GM10248 (cell line): ENCODE measurements at regions of chr1 and their contacts with region 1.

Region 1: GRCh38 chr1:115706587-115707425 is 61.7 kb downstream of the CASQ2 start:
- DNase-seq: peak; percentile 51
- CTCF ChIP-seq: peak; percentile 59

Region 2: GRCh38 chr1:115643666-115644065 is 63.1 kb before region 1 on chr1:
- CTCF ChIA-PET with region 1: interaction called, 16 read pairs
- POLR2A ChIA-PET with region 1: no interaction called
- DNase-seq: no peak
- CTCF ChIP-seq: no peak

Region 3: DNA sequence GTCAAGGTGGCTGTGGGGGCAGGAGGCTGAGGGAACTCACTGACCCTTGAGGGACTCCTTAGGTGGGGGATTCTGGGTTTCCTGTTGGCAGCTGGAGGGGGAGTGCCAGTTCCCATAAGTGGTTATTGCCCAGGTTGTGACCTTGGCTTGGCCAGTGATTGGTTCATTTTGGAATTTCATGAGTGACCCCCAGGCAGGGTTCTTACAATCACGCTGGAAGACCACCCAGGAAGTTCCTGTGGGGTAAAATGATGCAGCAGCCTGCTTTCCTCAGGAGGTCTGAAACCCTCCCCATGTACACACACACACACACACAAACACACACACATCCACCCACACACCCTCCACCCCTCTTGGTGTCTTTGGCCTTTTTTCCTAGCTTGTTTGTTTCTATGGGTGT is 48.2 kb before region 1 on chr1:
- CTCF ChIA-PET with region 1: interaction called, 28 read pairs
- POLR2A ChIA-PET with region 1: no interaction called
- DNase-seq: no peak
- CTCF ChIP-seq: no peak

Region 4: DNA sequence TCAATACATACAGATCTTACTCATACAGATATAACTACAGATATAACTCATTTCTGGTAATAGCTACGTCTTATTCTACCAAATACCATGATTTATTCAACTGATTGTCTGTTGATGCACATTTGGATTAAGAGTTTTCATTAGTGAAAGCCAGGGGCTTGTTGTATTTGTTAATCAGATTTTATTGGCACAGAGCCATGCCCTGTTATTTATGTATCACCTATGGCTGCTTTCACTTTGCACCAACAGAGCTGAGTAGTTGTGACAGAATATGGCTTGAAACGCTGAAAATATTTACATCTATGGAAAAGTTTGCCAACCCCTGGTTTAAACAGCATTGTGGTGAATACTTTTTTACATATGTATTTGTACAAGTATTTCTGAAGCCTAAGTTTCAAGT is 18.6 kb before region 1 on chr1:
- CTCF ChIA-PET with region 1: interaction called, 28 read pairs
- POLR2A ChIA-PET with region 1: no interaction called
- DNase-seq: no peak
- CTCF ChIP-seq: no peak

Region 5: DNA sequence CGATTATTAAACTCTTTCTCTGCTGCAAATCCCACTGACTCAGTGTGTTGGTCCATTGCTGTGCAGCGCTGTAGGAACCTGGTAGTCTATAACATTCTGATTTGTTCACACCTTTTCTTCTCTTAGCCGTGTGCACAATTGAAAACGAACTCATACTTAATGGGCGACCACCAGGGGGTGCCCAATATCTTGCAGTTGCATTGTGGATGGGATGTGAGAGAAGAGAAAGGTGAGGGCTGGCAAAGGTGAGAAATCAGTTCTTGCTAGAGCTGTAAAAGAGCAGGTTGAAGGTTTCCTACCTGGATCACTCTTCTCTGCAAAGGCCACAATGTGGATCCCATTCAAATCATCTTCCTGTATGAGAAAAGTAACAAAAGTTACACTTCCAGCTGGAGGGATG is 10.7 kb after region 1 on chr1:
- CTCF ChIA-PET with region 1: interaction called, 52 read pairs
- POLR2A ChIA-PET with region 1: no interaction called
- DNase-seq: peak; percentile 29
- CTCF ChIP-seq: peak; percentile 47

Region 6: DNA sequence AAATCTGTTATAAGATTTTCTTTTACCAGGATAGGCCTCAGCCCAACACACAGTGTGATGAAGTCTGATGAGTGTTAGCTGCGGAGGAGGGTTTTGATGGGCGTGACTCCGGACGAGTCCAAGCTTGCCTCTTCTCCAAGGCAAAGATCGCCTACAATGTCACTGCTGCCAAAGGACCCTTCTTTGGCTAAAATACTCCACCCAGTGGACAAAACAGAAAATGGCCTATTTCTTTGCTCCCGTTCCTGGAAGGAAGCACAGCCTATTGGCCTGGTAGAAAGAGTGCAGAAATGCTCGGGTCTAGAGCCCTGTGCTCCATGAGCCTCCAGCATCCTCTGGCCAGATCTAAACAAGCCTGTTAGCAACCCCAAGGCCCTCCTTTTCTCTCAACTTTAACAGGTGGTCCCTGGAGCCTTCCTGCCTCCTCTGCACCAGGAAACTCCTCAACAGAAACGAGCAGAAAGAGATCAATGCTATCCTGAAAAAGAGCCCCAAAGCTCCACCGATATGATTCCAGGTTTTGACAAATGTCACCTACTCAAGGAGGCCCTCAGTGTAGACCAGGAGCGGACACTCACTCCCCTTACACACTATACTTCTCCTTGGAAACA is 65.1 kb after region 1 on chr1:
- CTCF ChIA-PET with region 1: interaction called, 13 read pairs
- POLR2A ChIA-PET with region 1: no interaction called
- DNase-seq: peak; percentile 68
- CTCF ChIP-seq: peak; percentile 73

Region 7: DNA sequence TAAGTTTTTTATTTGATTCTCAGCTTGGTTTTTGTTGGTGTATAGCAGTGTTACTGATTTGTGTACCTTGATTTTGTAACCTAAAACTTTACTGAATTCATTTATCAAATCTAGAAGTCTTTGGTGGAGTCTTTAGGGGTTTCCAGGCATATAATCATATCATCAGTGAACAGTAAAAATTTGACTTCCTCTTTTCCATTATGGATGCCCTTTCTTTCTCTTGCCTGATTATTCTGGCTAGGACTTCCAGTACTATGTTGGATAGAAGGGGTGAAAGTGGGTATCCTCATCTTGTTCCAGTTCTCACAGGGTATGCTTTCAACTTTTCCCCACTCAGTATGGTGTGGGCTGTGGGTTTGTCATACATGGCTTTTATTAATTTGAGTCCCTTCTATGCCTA is 380.8 kb after region 1 on chr1:
- CTCF ChIA-PET with region 1: no interaction called
- POLR2A ChIA-PET with region 1: no interaction called
- DNase-seq: no peak
- CTCF ChIP-seq: no peak